Activated T-helper 1 cell treated with anti-CD3 and anti-CD28 coated beads, Interleukin-12 subunit alpha, Interleukin-12 subunit beta, Interleukin-2, Interleukin-4 antibody, amounts not matched to agents 30 ng/mL and 10 ng/mL and 1 ng/mL, durations not matched to agents 14 hours and 24 hours and 36 hours (primary cell): ENCODE measurements at regions of chr6 and their contacts with region 1.

Region 1: GRCh38 chr6:50848989-50849795 is 30.5 kb downstream of the TFAP2B start:
- DNase-seq: no peak
- H3K4me3 Mint-ChIP-seq: no peak overlapping the region
- H3K27ac Mint-ChIP-seq: no peak overlapping the region
- H3K4me1 Mint-ChIP-seq: no peaks in the 10 kb centered on the region
- H3K27me3 Mint-ChIP-seq: peaks cover 67% of the 10 kb centered on the region

Region 2: DNA sequence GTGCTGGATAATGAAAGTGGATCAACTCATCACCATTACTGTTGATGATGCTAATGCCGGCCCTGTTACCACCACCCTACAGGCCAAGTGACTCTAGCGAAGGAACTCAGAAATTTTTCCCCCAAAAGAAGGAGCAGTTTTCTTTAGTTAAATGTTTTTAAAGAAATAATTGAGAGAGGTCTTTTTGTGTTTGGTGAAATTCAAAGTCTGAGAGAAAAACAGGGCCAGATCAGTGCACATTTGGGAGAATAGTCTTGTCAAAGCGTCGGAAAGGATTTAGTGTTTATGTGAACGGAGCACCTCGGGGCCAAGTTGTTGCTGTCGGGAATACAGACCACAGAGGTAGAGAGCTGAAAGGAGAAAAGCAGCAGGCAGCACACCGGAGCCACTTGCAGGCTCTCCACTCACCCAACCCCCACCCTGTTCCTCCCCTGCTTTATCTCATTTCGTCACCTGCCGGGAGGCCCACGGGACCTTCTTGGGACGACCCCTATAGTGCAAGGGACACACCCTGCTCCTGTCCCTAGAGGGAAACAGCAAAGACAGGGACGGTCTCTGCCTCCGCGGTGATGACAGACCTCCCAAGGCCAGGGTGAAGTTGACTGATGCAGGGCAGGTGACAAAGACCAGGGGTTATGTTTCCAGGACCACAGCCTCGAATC is 23.7 kb before region 1 on chr6:
- intact Hi-C with region 1: loop called (anchors 2 kb)
- DNase-seq: no peak
- H3K4me3 Mint-ChIP-seq: no peak overlapping the region
- H3K27ac Mint-ChIP-seq: no peak overlapping the region
- H3K4me1 Mint-ChIP-seq: peaks cover 2% of the 10 kb centered on the region
- H3K27me3 Mint-ChIP-seq: peaks cover 77% of the 10 kb centered on the region